GM12878 (cell line): ENCODE measurements at regions of chr14 and their contacts with region 1.

Region 1: DNA sequence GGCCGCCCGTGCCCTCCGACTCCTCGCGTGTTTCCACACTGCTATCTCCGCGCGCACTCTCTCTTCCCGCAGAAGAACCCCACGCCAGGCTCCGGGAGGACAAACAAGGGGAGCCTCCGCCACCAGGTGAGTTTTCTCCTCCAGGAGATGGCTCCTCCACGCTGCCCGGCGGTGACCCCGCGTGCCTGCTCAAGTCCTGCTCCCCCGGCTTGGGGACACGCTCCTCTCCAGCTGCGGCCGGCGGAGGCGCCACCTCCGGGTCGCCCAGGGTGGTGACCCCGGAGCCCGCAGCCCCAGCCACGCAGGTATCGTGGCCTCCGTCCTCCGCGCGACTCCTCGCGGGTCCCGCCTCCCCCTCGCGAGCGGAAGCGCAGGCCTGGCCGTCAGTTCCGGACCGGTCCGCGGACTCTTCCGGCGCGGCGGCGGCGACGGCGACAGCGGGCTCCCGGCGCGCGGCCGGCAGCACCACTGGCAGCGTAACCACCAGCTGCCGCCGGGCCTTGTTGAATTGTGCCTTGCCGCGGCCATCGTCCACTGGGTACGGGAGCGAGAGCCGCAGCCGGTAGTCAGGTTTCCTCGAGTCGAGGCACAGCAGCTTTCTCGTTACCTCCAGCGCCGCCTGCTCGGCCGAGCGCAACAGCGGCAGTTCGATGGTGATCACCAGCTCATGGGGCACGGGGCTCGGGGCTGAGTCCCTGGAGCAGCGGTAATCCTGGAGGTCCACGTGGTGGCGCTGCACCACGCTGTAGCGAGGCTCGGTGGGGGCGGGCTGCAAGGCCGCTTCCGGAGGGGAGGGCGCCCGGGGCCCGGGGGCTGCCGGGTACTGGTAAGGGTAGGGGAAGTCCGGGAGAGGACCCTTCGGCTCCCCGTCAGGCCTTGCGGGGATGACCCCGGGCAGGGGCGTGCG is 1.2 kb downstream of the DNAAF2 start:
- DNase-seq: peak; percentile 78
- ATAC-seq: peak; percentile 82
- H3K4me3 ChIP-seq: peak overlapping the region; percentile 99
- H3K27ac ChIP-seq: peak overlapping the region; percentile 85
- H3K4me1 ChIP-seq: peaks cover 6% of the 10 kb centered on the region; the same call in 1 of the 2 replicates
- H3K27me3 ChIP-seq: no peaks in the 10 kb centered on the region
- CTCF ChIP-seq: peak; percentile 80 to 99 (median 87); a peak in 5 of 6 replicates
- EP300 ChIP-seq: peak in 1 of 2 experiments; percentile 35; a peak in 1 of 4 replicates
- POLR2A ChIP-seq: peak; percentile 83
- RAD21 ChIP-seq: peak; percentile 88

Region 2: DNA sequence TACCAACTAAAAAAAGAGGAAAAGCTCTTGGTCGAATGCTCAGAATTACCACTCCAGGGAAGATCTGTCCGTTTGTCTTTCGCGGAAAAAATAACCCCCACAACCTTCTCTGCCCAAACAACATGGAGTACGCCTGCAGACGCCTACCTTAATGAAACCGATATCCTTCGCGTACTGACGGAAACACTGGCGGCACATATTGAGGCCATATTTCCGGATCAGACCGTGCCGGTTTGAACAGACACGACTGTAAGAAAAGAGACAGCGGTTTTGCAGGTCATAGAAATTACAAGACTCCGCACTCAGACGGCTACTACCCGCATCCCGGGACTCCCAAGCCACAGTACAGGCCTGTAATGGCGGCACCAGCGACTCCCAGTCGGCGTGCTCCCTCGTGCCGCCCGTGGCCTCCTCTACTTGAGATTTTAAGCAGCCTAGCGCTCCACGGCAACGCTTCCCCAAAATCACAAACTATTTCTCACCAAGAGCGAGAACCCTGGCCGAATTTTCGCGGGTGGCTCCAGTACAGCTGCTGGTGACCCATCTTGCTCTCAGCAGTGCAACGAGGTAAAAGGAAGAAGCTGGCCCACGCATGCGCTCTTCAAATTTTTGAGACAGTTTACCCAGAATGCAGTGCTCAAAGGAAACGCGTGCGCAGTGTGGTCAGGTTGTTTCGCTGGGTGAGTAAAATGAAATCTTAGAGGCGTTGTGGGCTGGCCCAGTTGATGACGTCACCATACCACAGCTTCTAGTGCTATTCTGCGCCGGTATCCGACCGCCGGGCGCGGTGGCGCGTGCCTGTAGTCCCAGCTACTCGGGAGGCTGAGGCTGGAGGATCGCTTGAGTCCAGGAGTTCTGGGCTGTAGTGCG is 47.9 kb before region 1 on chr14 and contains the start of gene RPS29:
- CTCF ChIA-PET with region 1: interaction called, 20 read pairs
- POLR2A ChIA-PET with region 1: interaction called, 7 read pairs
- RAD21 ChIA-PET with region 1: interaction called, 9 read pairs
- SMC1A ChIA-PET with region 1: interaction called, 4 read pairs
- in situ Hi-C with region 1: no loop called
- intact Hi-C with region 1: loop called (anchors 2 kb)
- DNase-seq: peak; percentile 99
- ATAC-seq: peak; percentile 84
- H3K4me3 ChIP-seq: peak within 1 kb of the TSS; percentile 90
- H3K27ac ChIP-seq: peak within 1 kb of the TSS; percentile 99
- H3K4me1 ChIP-seq: no peaks in the 10 kb centered on the region
- H3K27me3 ChIP-seq: no peaks in the 10 kb centered on the region
- CTCF ChIP-seq: no peak
- EP300 ChIP-seq: no peak; a peak in 1 of 4 replicates
- POLR2A ChIP-seq: peak; percentile 91
- RAD21 ChIP-seq: no peak
- polyA plus RNA-seq, gene RPS29: 7,374 to 7,763 TPM

Region 3: GRCh38 chr14:49620182-49621113 is 13.4 kb before region 1 on chr14 and contains the starts of genes MGAT2 and RPL36AL:
- CTCF ChIA-PET with region 1: interaction called, 14 read pairs
- POLR2A ChIA-PET with region 1: interaction called, 122 read pairs
- RAD21 ChIA-PET with region 1: interaction called, 82 read pairs
- SMC1A ChIA-PET with region 1: interaction called, 28 read pairs
- in situ Hi-C with region 1: no loop called
- intact Hi-C with region 1: no loop called
- DNase-seq: peak; percentile 97
- ATAC-seq: peak; percentile 92
- H3K4me3 ChIP-seq: peak within 1 kb of the TSS; percentile 92
- H3K27ac ChIP-seq: peak within 1 kb of the TSS; percentile 98
- H3K4me1 ChIP-seq: no peaks in the 10 kb centered on the region; the same call in 1 of the 2 replicates
- H3K27me3 ChIP-seq: no peaks in the 10 kb centered on the region
- CTCF ChIP-seq: peak; percentile 13 to 45 (median 21); a peak in 3 of 6 replicates
- EP300 ChIP-seq: no peak; a peak in 1 of 4 replicates
- POLR2A ChIP-seq: peak; percentile 99
- RAD21 ChIP-seq: no peak
- polyA plus RNA-seq, gene MGAT2: 0.03 TPM in 1 of 2 experiments, not detected in the other
- polyA plus RNA-seq, gene RPL36AL: 1,365 to 1,379 TPM

Region 4: GRCh38 chr14:49677643-49678042 is 43.8 kb after region 1 on chr14:
- CTCF ChIA-PET with region 1: no interaction called
- POLR2A ChIA-PET with region 1: no interaction called
- RAD21 ChIA-PET with region 1: no interaction called
- SMC1A ChIA-PET with region 1: no interaction called
- in situ Hi-C with region 1: no loop called
- intact Hi-C with region 1: no loop called
- DNase-seq: no peak
- ATAC-seq: peak; percentile 84
- H3K4me3 ChIP-seq: no peak overlapping the region
- H3K27ac ChIP-seq: no peak overlapping the region
- H3K4me1 ChIP-seq: no peaks in the 10 kb centered on the region
- H3K27me3 ChIP-seq: no peaks in the 10 kb centered on the region
- CTCF ChIP-seq: peak in 2 of 3 experiments; percentile 10 to 29; a peak in 1 of 6 replicates
- EP300 ChIP-seq: no peak
- POLR2A ChIP-seq: no peak
- RAD21 ChIP-seq: no peak

Region 5: GRCh38 chr14:49720744-49721143 is 86.9 kb after region 1 on chr14:
- CTCF ChIA-PET with region 1: no interaction called
- POLR2A ChIA-PET with region 1: no interaction called
- RAD21 ChIA-PET with region 1: no interaction called
- SMC1A ChIA-PET with region 1: no interaction called
- in situ Hi-C with region 1: no loop called
- intact Hi-C with region 1: no loop called
- DNase-seq: no peak
- ATAC-seq: no peak
- H3K4me3 ChIP-seq: no peak overlapping the region
- H3K27ac ChIP-seq: no peak overlapping the region
- H3K4me1 ChIP-seq: no peaks in the 10 kb centered on the region
- H3K27me3 ChIP-seq: no peaks in the 10 kb centered on the region
- CTCF ChIP-seq: no peak
- EP300 ChIP-seq: no peak
- POLR2A ChIP-seq: no peak
- RAD21 ChIP-seq: no peak

Region 6: DNA sequence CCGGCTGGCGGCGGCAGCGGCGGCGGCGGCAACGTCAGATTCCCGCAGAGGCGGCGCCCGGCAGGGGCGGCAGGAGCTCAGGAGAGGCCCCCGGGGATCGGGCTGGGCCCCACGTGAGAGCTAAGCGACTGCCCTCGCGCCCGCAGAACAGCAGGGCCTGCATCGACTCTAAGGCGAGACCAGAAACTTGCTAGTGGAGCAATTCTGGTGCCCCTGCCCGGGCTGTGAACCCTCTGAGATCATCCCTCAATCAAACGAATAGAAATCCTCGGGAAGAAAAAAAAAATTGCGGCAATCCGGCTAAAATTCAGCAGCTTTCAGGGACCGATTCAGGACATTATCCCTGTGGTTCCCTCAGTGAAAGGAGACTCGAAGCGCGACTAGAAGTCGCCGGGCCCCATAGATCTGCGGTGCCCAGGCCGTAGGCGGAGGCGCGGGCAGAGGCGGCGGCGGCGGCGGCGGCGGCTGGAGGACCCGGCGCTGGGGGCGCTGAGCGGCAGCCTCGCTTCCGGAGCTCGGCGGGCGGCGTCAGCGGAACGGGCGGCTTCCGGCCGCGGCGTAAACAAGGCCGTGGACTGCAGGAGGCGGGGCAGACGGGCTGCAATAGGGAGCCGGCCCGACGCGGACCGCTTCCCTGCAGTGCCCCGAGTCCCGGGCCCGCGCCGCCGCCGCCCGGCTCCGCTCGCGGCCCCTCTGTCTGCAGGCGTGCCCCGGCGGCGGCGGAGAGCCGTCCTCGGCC is 133.8 kb after region 1 on chr14 and contains the start of gene KLHDC2:
- CTCF ChIA-PET with region 1: interaction called, 6 read pairs
- POLR2A ChIA-PET with region 1: interaction called, 31 read pairs
- RAD21 ChIA-PET with region 1: interaction called, 16 read pairs
- SMC1A ChIA-PET with region 1: interaction called, 5 read pairs
- in situ Hi-C with region 1: loop called (anchors 5 kb)
- intact Hi-C with region 1: loop called (anchors 1 kb)
- DNase-seq: no peak
- ATAC-seq: peak; percentile 94
- H3K4me3 ChIP-seq: peak within 1 kb of the TSS; percentile 93
- H3K27ac ChIP-seq: peak within 1 kb of the TSS; percentile 93
- H3K4me1 ChIP-seq: peaks cover 7% of the 10 kb centered on the region
- H3K27me3 ChIP-seq: no peaks in the 10 kb centered on the region
- CTCF ChIP-seq: peak in 1 of 3 experiments; percentile 54; a peak in 2 of 6 replicates
- EP300 ChIP-seq: no peak
- POLR2A ChIP-seq: peak; percentile 81
- RAD21 ChIP-seq: no peak
- polyA plus RNA-seq, gene KLHDC2: 6.0 to 13.3 TPM

Region 7: GRCh38 chr14:49852301-49853157 is 218.6 kb after region 1 on chr14 and contains the start of gene NEMF:
- CTCF ChIA-PET with region 1: interaction called, 17 read pairs
- POLR2A ChIA-PET with region 1: interaction called, 13 read pairs
- RAD21 ChIA-PET with region 1: interaction called, 34 read pairs
- SMC1A ChIA-PET with region 1: interaction called, 8 read pairs
- in situ Hi-C with region 1: no loop called
- intact Hi-C with region 1: loop called (anchors 2 kb)
- DNase-seq: peak; percentile 92
- ATAC-seq: peak; percentile 89
- H3K4me3 ChIP-seq: peak within 1 kb of the TSS; percentile 97
- H3K27ac ChIP-seq: peak within 1 kb of the TSS; percentile 88
- H3K4me1 ChIP-seq: peaks cover 1% of the 10 kb centered on the region; the same call in 1 of the 2 replicates
- H3K27me3 ChIP-seq: no peaks in the 10 kb centered on the region
- CTCF ChIP-seq: peak; percentile 67 to 95 (median 81)
- EP300 ChIP-seq: no peak
- POLR2A ChIP-seq: peak; percentile 89
- RAD21 ChIP-seq: peak; percentile 57
- polyA plus RNA-seq, gene NEMF: 36.8 to 62.6 TPM

Region 8: DNA sequence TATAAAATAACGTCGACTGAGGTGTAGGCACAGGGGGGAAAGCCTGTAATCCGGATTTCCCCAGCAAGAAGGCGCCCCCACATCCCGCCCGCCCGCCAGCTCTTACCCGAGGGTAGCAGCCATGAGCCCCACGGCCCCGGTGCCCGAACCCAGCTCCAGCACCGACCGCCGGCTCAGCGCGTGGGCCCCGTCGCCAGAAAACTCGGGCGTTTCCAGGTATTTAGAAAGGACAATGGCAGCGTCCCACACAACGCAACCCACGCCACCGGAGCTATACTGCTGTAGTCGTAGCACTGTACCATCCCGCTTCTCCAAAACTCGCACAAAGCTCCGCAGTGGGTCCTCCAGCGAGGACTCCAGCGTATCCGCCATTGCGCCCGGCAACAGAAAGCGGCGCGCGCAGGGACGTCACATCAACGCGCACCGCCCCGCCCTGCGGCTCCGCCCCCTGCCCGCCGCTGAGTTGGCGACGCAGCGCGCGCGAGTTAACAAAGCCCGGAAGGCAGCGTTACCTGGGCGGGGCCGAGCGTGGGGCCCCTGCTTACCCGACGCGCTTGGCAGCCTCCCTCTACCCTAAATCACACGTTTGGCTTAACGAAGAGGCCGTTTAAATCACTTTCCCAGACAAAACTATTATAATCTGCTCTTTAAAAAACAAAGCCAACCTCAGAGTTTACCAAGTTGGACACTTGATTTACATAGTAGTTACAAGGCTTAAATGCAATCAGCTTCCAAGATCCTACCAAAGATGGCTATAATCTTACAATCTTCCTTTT is 482.5 kb after region 1 on chr14 and contains the start of gene VCPKMT:
- CTCF ChIA-PET with region 1: interaction called, 3 read pairs
- POLR2A ChIA-PET with region 1: no interaction called
- RAD21 ChIA-PET with region 1: no interaction called
- SMC1A ChIA-PET with region 1: no interaction called
- in situ Hi-C with region 1: loop called (anchors 10 kb)
- intact Hi-C with region 1: loop called (anchors 5 kb)
- DNase-seq: peak; percentile 62
- ATAC-seq: peak; percentile 97
- H3K4me3 ChIP-seq: peak within 1 kb of the TSS; percentile 76
- H3K27ac ChIP-seq: peak within 1 kb of the TSS; percentile 84
- H3K4me1 ChIP-seq: peaks cover 8% of the 10 kb centered on the region
- H3K27me3 ChIP-seq: no peaks in the 10 kb centered on the region
- CTCF ChIP-seq: no peak
- EP300 ChIP-seq: 0 out of 4 replicates have a peak, but pooled peaks of 1 of the 2 experiments have one; percentile 13
- POLR2A ChIP-seq: peak; percentile 93
- RAD21 ChIP-seq: no peak
- polyA plus RNA-seq, gene VCPKMT: 8.5 to 11.5 TPM